CD8-positive, alpha-beta T cell (primary cell): ENCODE measurements at regions of chr5 and their contacts with region 1.

Region 1: DNA sequence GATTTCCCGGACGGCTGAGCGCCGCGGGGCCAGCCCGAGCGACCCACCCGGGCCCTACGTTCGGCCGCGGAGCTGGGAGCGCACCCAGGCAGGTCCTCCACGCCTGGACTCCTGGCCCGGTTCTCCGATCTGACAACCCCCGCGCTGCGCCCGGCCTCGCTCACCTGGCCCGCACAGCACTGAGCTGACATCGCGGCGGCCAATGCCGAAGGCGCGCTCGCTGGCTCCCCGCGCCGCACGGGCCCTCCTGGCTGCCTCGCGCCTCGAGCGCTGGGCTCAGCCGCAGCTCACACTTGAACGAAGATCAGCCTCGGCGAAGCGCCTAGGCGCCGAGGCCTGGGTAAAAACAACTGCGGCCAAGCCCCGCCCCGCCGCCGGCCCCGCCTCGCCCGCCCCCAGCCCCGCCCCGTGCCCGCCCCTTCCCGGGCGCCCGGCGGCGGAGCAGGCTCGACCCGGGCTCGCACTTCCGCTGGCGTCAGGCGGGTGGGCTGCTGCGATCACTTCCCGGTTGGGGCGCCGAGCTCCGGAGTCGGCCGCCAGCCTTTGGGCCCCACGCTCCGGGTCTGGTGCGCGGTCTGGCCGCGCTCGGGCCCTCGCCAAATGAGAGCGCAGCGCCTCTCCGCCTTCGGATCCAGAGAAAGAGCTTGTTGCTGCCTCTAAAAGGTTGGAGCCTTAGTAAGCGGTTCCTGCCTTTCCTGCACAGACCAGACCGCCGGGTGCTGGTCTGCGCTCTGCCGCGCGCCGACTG is at the start of gene SERINC5:
- DNase-seq: peak; percentile 69 to 92 (median 83)
- ATAC-seq: peak; percentile 74
- H3K4me3 ChIP-seq: peak within 1 kb of the TSS; percentile 83 to 91
- H3K4me3 Mint-ChIP-seq: peak within 1 kb of the TSS; percentile 99
- H3K27ac ChIP-seq: peak within 1 kb of the TSS; percentile 89 to 94
- H3K27ac Mint-ChIP-seq: peak within 1 kb of the TSS; percentile 99
- H3K4me1 ChIP-seq: peaks cover 36% of the 10 kb centered on the region
- H3K4me1 Mint-ChIP-seq: peaks cover 57% of the 10 kb centered on the region
- H3K27me3 ChIP-seq: no peaks in the 10 kb centered on the region
- H3K27me3 Mint-ChIP-seq: no peaks in the 10 kb centered on the region
- CTCF ChIP-seq: no peak
- total RNA-seq, gene SERINC5: 112 to 117 TPM

Region 2: GRCh38 chr5:78809444-78809843 is 1446.5 kb before region 1 on chr5:
- CTCF ChIA-PET with region 1: no interaction called
- POLR2A ChIA-PET with region 1: no interaction called
- intact Hi-C with region 1: no loop called
- DNase-seq: no peak
- ATAC-seq: no peak
- H3K4me3 ChIP-seq: no peak overlapping the region
- H3K4me3 Mint-ChIP-seq: no peak overlapping the region
- H3K27ac ChIP-seq: no peak overlapping the region
- H3K27ac Mint-ChIP-seq: no peak overlapping the region
- H3K4me1 ChIP-seq: no peaks in the 10 kb centered on the region
- H3K4me1 Mint-ChIP-seq: no peaks in the 10 kb centered on the region
- H3K27me3 ChIP-seq: no peaks in the 10 kb centered on the region
- H3K27me3 Mint-ChIP-seq: no peaks in the 10 kb centered on the region
- CTCF ChIP-seq: no peak

Region 3: GRCh38 chr5:79990598-79991507 is 265.1 kb before region 1 on chr5 and contains the start of gene MTX3:
- CTCF ChIA-PET with region 1: no interaction called
- POLR2A ChIA-PET with region 1: interaction called, 4 read pairs
- intact Hi-C with region 1: loop called in 1 of 2 experiments (anchors 5 kb)
- DNase-seq: peak; percentile 75 to 93 (median 89)
- ATAC-seq: peak; percentile 95
- H3K4me3 ChIP-seq: peak within 1 kb of the TSS; percentile 60 to 72
- H3K4me3 Mint-ChIP-seq: peak within 1 kb of the TSS; percentile 86
- H3K27ac ChIP-seq: peak within 1 kb of the TSS; percentile 51 to 70
- H3K27ac Mint-ChIP-seq: peak within 1 kb of the TSS; percentile 88
- H3K4me1 ChIP-seq: peaks cover 20% of the 10 kb centered on the region
- H3K4me1 Mint-ChIP-seq: peaks cover 32% of the 10 kb centered on the region
- H3K27me3 ChIP-seq: no peaks in the 10 kb centered on the region
- H3K27me3 Mint-ChIP-seq: peaks cover 11% of the 10 kb centered on the region
- CTCF ChIP-seq: no peak
- total RNA-seq, gene MTX3: 26.2 to 27.1 TPM

Region 4: GRCh38 chr5:80141147-80141671 is 114.7 kb before region 1 on chr5:
- CTCF ChIA-PET with region 1: interaction called, 6 read pairs
- POLR2A ChIA-PET with region 1: interaction called, 16 read pairs
- intact Hi-C with region 1: no loop called
- DNase-seq: peak in 1 of 9 experiments; percentile 47
- ATAC-seq: no peak
- H3K4me3 ChIP-seq: no peak overlapping the region
- H3K4me3 Mint-ChIP-seq: peak overlapping the region; percentile 50
- H3K27ac ChIP-seq: peak overlapping the region; percentile 9 to 55
- H3K27ac Mint-ChIP-seq: peak overlapping the region; percentile 91
- H3K4me1 ChIP-seq: peaks cover 70% of the 10 kb centered on the region
- H3K4me1 Mint-ChIP-seq: peaks cover 74% of the 10 kb centered on the region
- H3K27me3 ChIP-seq: no peaks in the 10 kb centered on the region
- H3K27me3 Mint-ChIP-seq: no peaks in the 10 kb centered on the region
- CTCF ChIP-seq: no peak

Region 5: DNA sequence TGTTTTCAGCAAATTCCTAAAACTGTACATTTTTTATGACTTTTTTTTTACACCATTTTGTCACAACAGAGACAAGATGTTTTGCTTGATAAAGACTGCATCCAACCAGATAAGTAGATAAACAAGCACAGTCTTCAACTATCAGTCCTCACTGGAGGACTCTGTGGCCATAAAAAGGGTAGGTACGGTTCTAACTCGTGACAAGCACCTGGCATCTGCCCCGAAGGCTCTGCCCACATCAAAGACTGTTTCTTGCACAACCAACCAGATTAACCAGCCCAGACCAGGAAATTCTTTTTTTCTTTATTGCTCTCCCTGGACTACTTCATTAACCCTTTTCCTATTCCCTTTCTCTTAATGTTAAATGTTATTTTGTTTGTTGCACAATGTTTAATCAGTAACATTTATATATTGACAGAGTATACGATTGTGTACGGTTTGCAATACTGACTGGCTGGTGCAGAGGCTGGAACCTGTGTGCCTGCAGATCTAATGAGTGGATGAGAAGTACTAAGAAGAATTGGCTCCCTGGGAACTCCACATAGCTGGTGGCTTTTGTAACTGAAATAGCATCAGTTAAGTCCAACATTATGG is 74.2 kb before region 1 on chr5:
- CTCF ChIA-PET with region 1: no interaction called
- POLR2A ChIA-PET with region 1: interaction called, 59 read pairs
- intact Hi-C with region 1: no loop called
- DNase-seq: peak in 7 of 9 experiments; percentile 42 to 85 (median 67)
- ATAC-seq: peak; percentile 32
- H3K4me3 ChIP-seq: peak overlapping the region in 1 of 2 experiments; percentile 3
- H3K4me3 Mint-ChIP-seq: peak overlapping the region; percentile 64
- H3K27ac ChIP-seq: peak overlapping the region; percentile 20 to 23
- H3K27ac Mint-ChIP-seq: peak overlapping the region; percentile 96
- H3K4me1 ChIP-seq: peaks cover 89% of the 10 kb centered on the region
- H3K4me1 Mint-ChIP-seq: peaks cover 87% of the 10 kb centered on the region
- H3K27me3 ChIP-seq: no peaks in the 10 kb centered on the region
- H3K27me3 Mint-ChIP-seq: no peaks in the 10 kb centered on the region
- CTCF ChIP-seq: no peak

Region 6: DNA sequence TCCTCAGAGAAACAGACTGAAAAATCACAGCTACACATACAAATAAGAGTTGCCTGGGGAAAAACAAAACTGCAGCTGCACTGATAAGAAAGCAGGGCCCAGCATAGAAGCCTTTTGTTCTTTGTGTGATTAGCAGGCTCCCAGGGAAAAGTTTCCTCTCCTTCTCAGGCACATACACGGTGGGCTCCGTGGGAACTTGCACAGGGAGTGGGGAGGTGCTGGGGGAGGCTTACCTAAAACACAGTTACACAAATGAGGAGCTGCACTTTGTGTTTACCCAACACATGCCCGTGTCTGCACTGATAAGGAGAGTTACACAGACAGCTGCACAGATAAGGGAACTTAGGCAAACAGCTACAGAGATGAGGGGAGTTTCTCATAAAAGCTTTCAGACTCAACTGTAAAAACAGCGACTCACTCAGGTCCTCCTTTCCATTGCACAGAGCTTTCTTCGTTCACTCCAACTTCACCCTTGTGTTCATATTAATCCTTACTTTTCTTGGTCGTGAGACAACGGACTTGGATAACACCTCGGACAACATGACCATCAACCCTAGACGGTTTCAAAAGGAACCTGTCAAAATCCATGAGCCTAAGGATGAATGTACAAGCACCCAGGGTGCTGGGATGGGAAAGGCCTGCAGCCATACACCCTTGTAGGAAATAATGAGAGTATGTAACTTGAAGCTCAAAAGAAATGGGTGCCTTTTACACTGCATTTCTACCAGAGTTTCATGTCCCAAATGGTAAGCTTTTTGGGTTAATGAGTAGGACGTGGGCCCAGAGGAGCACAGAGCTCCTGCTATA is 50.9 kb before region 1 on chr5:
- CTCF ChIA-PET with region 1: interaction called, 11 read pairs
- POLR2A ChIA-PET with region 1: interaction called, 9 read pairs
- intact Hi-C with region 1: no loop called
- DNase-seq: peak in 2 of 9 experiments; percentile 31 to 64
- ATAC-seq: peak; percentile 82
- H3K4me3 ChIP-seq: no peak overlapping the region
- H3K4me3 Mint-ChIP-seq: peak overlapping the region; percentile 47
- H3K27ac ChIP-seq: peak overlapping the region in 1 of 2 experiments; percentile 27
- H3K27ac Mint-ChIP-seq: peak overlapping the region; percentile 87
- H3K4me1 ChIP-seq: peaks cover 78% of the 10 kb centered on the region
- H3K4me1 Mint-ChIP-seq: peaks cover 88% of the 10 kb centered on the region
- H3K27me3 ChIP-seq: no peaks in the 10 kb centered on the region
- H3K27me3 Mint-ChIP-seq: no peaks in the 10 kb centered on the region
- CTCF ChIP-seq: peak; percentile 34

Region 7: GRCh38 chr5:80238778-80239679 is 16.9 kb before region 1 on chr5:
- CTCF ChIA-PET with region 1: interaction called, 4 read pairs
- POLR2A ChIA-PET with region 1: interaction called, 14 read pairs
- intact Hi-C with region 1: loop called in 1 of 2 experiments (anchors 2 kb)
- DNase-seq: peak in 2 of 9 experiments; percentile 29 to 39
- ATAC-seq: no peak
- H3K4me3 ChIP-seq: no peak overlapping the region
- H3K4me3 Mint-ChIP-seq: peak overlapping the region; percentile 66
- H3K27ac ChIP-seq: no peak overlapping the region
- H3K27ac Mint-ChIP-seq: peak overlapping the region; percentile 85
- H3K4me1 ChIP-seq: peaks cover 71% of the 10 kb centered on the region
- H3K4me1 Mint-ChIP-seq: peaks cover 70% of the 10 kb centered on the region
- H3K27me3 ChIP-seq: no peaks in the 10 kb centered on the region
- H3K27me3 Mint-ChIP-seq: no peaks in the 10 kb centered on the region
- CTCF ChIP-seq: no peak

Region 8: DNA sequence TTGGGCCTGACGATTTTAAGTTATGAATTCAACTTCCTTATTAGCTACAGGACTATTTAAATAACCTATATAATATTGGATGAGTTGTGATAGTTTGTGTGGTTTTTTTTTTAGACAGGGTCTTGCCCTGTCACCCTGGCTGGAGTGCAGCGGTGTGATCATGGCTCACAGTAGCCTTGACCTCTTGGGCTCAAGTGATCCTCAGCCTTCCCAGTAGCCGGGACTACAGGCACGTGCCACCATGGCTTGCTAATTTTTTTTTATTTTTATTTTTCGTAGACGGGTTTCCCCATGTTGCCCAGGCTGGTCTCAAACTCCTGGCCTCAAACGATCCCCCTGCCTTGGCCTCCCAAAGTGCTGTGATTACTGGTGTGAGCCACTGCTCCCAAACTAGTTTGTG is 81.5 kb after region 1 on chr5:
- CTCF ChIA-PET with region 1: no interaction called
- POLR2A ChIA-PET with region 1: no interaction called
- intact Hi-C with region 1: no loop called
- DNase-seq: no peak
- ATAC-seq: no peak
- H3K4me3 ChIP-seq: no peak overlapping the region
- H3K4me3 Mint-ChIP-seq: no peak overlapping the region
- H3K27ac ChIP-seq: no peak overlapping the region
- H3K27ac Mint-ChIP-seq: no peak overlapping the region
- H3K4me1 ChIP-seq: no peaks in the 10 kb centered on the region
- H3K4me1 Mint-ChIP-seq: no peaks in the 10 kb centered on the region
- H3K27me3 ChIP-seq: no peaks in the 10 kb centered on the region
- H3K27me3 Mint-ChIP-seq: peaks cover 23% of the 10 kb centered on the region
- CTCF ChIP-seq: no peak

Region 9: DNA sequence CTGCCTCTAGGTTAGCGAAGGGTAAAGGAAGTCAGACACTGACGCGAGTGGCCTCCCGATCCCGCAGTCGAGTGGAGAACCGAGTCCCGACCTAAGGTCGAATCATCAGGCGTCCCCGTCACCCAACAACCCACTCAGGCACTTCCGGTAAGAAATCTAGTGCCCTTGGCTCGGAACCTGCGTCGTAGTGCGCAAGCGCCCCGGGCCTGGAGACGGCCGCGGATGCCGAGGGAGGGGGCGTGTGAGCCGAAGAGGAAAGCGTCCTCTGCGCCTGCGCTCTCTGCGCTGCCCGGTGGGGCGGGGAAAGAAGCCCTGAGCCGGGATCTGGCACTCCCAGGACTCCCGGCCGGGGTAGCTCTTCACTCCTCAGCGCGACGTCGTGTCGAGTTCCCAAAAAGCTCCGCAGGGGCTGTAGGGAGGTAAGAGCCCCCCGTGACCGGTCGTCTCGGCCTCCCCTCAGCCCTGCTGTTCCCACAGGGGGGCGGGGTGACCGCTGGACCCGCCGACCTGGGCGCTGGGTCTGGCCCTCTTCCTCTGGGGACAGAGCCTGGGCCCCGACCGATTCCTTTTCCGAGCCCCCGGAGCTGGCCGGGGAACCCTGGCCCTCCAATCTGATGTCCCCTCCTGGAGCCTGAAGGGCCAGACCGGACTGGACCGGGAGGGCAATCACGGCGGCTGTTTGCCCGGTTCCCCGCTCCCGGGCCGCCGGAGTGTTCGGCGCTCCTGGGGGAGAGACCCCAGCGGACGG is 152.0 kb after region 1 on chr5 and contains the start of gene ZFYVE16:
- CTCF ChIA-PET with region 1: no interaction called
- POLR2A ChIA-PET with region 1: no interaction called
- intact Hi-C with region 1: loop called (anchors 2 to 5 kb)
- DNase-seq: peak; percentile 91 to 99 (median 97)
- ATAC-seq: peak; percentile 88
- H3K4me3 ChIP-seq: peak within 1 kb of the TSS; percentile 86 to 94
- H3K4me3 Mint-ChIP-seq: peak within 1 kb of the TSS; percentile 99
- H3K27ac ChIP-seq: peak within 1 kb of the TSS; percentile 78 to 93
- H3K27ac Mint-ChIP-seq: peak within 1 kb of the TSS; percentile 100
- H3K4me1 ChIP-seq: peaks cover 12% of the 10 kb centered on the region
- H3K4me1 Mint-ChIP-seq: peaks cover 28% of the 10 kb centered on the region
- H3K27me3 ChIP-seq: no peaks in the 10 kb centered on the region
- H3K27me3 Mint-ChIP-seq: no peaks in the 10 kb centered on the region
- CTCF ChIP-seq: no peak
- total RNA-seq, gene ZFYVE16: 7.6 to 9.9 TPM

Region 10: GRCh38 chr5:80487829-80488721 is 232.2 kb after region 1 on chr5 and contains the start of gene FAM151B:
- CTCF ChIA-PET with region 1: no interaction called
- POLR2A ChIA-PET with region 1: no interaction called
- intact Hi-C with region 1: no loop called
- DNase-seq: peak; percentile 5 to 80 (median 61)
- ATAC-seq: peak; percentile 83
- H3K4me3 ChIP-seq: peak within 1 kb of the TSS; percentile 46 to 68
- H3K4me3 Mint-ChIP-seq: peak within 1 kb of the TSS; percentile 81
- H3K27ac ChIP-seq: peak within 1 kb of the TSS in 1 of 2 experiments; percentile 10
- H3K27ac Mint-ChIP-seq: peak within 1 kb of the TSS; percentile 52
- H3K4me1 ChIP-seq: peaks cover 9% of the 10 kb centered on the region
- H3K4me1 Mint-ChIP-seq: peaks cover 12% of the 10 kb centered on the region
- H3K27me3 ChIP-seq: peaks cover 0 to 7% of the 10 kb centered on the region in 2 experiments
- H3K27me3 Mint-ChIP-seq: peaks cover 16% of the 10 kb centered on the region
- CTCF ChIP-seq: no peak
- total RNA-seq, gene FAM151B: 0.19 TPM in 1 of 2 experiments, not detected in the other